Breast epithelium (tissue), 4 donors: ENCODE measurements at regions of chr2 and their contacts with region 1.

Region 1: GRCh38 chr2:11009891-11010290 is 98.2 kb downstream of the KCNF1 start:
- DNase-seq: no peak
- H3K4me3 ChIP-seq: no peak overlapping the region
- H3K27ac ChIP-seq: no peak overlapping the region
- H3K4me1 ChIP-seq: no peaks in the 10 kb centered on the region
- H3K27me3 ChIP-seq: no peaks in the 10 kb centered on the region
- CTCF ChIP-seq: no peak
- POLR2A ChIP-seq: no peak

Region 2: DNA sequence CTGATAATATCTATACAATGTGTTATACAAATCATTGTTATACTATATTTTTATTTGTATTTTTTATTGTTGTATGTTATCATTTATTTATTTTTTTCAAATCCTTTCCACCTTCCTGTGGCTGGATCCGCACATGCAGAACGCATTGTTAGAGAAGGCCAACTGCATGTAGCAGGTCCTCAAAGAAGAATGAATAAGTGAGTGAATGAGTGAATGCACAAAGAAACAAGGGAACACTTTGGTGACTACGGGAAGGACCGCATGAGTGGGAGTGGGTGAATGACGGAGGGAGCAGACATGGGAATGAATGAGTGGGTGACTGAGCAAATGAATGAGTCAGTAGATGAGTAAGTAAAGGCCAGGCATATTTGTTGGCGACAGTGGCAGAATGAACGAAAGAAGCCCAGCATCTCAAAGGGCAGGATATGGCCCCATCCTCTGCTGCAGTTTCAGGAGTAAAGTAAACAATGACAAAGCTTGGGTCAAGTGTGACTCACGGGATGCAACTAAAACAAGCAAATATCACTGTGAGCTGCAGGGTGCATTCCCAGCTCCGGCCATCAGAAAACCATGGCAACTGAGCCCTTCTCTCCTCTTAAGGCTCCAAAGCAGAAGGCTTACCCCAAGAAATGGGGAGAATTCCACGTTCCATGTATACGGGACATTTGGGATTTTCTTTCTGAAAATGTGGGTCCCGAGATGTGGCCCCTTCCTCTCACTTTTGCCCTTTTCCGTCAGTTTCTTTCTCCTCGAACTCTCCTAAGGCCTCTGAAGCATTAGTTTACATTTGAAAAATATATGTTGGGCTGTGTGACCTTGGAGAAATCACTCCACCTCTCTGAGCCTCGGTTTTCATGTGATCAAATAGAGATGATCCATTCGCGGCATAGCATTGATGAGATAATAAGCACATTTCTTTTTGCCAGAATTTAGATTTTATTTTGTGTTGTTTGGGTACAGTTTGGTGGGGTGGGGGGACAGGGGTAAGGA is 73.6 kb before region 1 on chr2:
- intact Hi-C with region 1: no loop called
- DNase-seq: no peak
- H3K4me3 ChIP-seq: no peak overlapping the region
- H3K27ac ChIP-seq: no peak overlapping the region
- H3K4me1 ChIP-seq: no peaks in the 10 kb centered on the region
- H3K27me3 ChIP-seq: peaks cover 0 to 8% of the 10 kb centered on the region in 2 donors
- CTCF ChIP-seq: peak in 1 of 3 donors; percentile 11
- POLR2A ChIP-seq: no peak

Region 3: GRCh38 chr2:10982931-10983701 is 26.8 kb before region 1 on chr2:
- intact Hi-C with region 1: loop called (anchors 1 kb)
- DNase-seq: no peak
- H3K4me3 ChIP-seq: peak overlapping the region in 1 of 3 donors; percentile 2
- H3K27ac ChIP-seq: no peak overlapping the region
- H3K4me1 ChIP-seq: no peaks in the 10 kb centered on the region
- H3K27me3 ChIP-seq: no peaks in the 10 kb centered on the region
- CTCF ChIP-seq: no peak
- POLR2A ChIP-seq: no peak

Region 4: DNA sequence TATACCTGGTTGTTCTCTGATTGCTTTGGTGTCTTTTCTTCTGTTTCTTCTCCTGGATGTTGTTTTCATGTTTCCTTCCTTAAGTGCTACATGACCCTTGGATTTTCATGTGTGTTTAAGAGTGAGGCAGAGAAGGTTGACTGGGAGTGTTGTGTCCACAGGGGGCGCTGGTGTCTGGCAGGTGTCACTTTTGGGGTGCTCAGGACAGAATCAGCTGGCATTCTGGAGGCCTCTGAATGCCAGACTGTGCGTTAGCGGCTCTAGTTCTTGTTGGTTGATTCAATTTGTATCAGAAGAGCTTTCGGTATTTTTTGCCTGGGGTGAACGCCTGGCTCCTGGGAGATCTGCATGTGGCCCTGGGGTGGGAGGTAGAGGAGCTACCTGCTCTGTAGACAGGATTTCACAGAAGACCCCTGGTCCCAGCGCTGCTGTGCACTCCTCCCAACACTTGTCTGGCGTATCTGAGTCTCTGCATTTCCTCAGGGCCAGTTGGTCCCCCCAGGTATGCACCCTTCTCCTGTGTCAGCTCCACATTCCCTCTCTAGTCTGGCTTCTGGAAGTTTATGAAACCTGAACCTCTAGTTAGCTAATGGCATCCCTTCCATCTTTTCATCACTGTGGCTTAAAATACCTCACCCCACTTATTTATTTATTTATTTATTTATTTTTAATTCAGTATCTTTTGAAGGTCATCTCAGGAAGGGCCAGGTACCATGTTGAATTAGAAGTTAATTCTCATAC is 525.0 kb after region 1 on chr2:
- intact Hi-C with region 1: no loop called
- DNase-seq: peak in 1 of 2 donors; percentile 7
- H3K4me3 ChIP-seq: no peak overlapping the region
- H3K27ac ChIP-seq: no peak overlapping the region
- H3K4me1 ChIP-seq: no peaks in the 10 kb centered on the region
- H3K27me3 ChIP-seq: no peaks in the 10 kb centered on the region
- CTCF ChIP-seq: no peak
- POLR2A ChIP-seq: no peak

Region 5: DNA sequence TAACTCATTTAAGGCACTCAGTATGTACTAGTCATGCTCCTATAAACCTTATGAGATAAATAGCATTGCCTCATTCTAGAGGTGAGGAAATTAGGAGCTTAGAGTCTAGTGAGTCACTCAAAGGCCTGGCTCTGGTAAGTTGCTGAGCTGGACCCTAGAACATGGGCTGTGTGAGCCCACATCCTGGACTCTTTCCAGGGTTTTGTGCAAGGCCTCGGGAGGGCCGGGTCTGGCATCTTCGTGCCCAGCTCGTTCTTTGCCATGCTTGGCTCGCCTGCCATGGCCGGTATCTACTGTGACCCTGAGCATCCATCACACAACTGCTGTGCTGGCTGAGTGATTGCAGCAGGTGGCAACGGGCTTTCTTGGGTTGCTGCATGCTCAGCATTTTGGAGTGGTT is 904.6 kb after region 1 on chr2:
- intact Hi-C with region 1: loop called (anchors 5 kb)
- DNase-seq: no peak
- H3K4me3 ChIP-seq: no peak overlapping the region
- H3K27ac ChIP-seq: no peak overlapping the region
- H3K4me1 ChIP-seq: no peaks in the 10 kb centered on the region
- H3K27me3 ChIP-seq: no peaks in the 10 kb centered on the region
- CTCF ChIP-seq: no peak
- POLR2A ChIP-seq: no peak